PC-9 (cell line): ENCODE measurements at regions of chr18 and their contacts with region 1.

Region 1: GRCh38 chr18:3593904-3594661 is 144.1 kb downstream of the TGIF1 start:
- DNase-seq: peak; percentile 91 to 93
- H3K4me3 ChIP-seq: peak overlapping the region; percentile 69
- H3K27ac ChIP-seq: peak overlapping the region; percentile 100
- H3K4me1 ChIP-seq: peaks cover 77% of the 10 kb centered on the region
- H3K27me3 ChIP-seq: no peaks in the 10 kb centered on the region
- CTCF ChIP-seq: peak; percentile 88

Region 2: DNA sequence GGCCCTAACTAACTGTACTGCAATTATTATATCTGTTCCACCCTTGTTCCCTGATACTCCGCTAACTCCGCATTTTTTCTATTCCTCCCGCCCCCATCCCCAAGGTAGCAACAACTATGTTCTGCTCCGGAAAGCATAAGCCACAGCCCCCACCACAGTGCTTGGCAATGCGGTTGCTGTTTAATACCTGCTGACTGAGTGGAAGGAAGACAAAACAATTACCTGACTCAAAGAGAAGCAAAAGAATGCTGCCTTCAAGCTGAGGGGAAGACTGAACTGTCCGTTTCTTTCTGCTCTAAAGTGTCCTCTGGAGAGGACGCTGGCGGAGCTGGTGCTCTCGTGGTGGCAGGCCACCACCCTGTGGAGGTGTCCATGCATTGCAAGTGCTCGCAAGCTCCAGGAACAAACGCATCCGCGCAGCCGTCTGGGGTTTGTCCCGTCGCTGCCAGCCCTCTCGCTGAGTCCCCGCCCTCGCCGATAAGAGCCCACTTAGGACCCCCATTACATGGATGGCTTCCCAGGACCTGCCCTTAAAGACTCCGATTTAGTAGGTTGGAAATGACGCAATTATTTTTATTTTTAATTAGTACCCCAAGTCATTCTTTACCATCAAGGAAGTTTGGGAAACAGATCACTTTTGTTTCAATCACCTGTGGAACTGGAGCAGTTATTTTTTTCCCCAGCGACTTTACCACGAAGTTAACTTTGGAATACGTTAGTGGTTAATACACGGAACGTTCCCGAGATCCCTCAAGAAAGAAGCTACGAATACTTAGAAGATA is 348.0 kb before region 1 on chr18:
- CTCF ChIA-PET with region 1: interaction called, 12 read pairs
- POLR2A ChIA-PET with region 1: no interaction called
- intact Hi-C with region 1: no loop called
- DNase-seq: peak; percentile 79 to 88
- H3K4me3 ChIP-seq: peak overlapping the region; percentile 86
- H3K27ac ChIP-seq: peak overlapping the region; percentile 87
- H3K4me1 ChIP-seq: peaks cover 32% of the 10 kb centered on the region
- H3K27me3 ChIP-seq: no peaks in the 10 kb centered on the region
- CTCF ChIP-seq: peak; percentile 96

Region 3: GRCh38 chr18:3380384-3380961 is 213.6 kb before region 1 on chr18:
- CTCF ChIA-PET with region 1: interaction called, 18 read pairs
- POLR2A ChIA-PET with region 1: interaction called, 37 read pairs
- intact Hi-C with region 1: loop called (anchors 1 kb)
- DNase-seq: peak in 1 of 2 experiments; percentile 81
- H3K4me3 ChIP-seq: peak overlapping the region; percentile 35; the same call in 1 of the 2 replicates
- H3K27ac ChIP-seq: peak overlapping the region; percentile 99
- H3K4me1 ChIP-seq: peaks cover 64% of the 10 kb centered on the region
- H3K27me3 ChIP-seq: no peaks in the 10 kb centered on the region
- CTCF ChIP-seq: peak; percentile 44; the same call in 1 of the 2 replicates

Region 4: DNA sequence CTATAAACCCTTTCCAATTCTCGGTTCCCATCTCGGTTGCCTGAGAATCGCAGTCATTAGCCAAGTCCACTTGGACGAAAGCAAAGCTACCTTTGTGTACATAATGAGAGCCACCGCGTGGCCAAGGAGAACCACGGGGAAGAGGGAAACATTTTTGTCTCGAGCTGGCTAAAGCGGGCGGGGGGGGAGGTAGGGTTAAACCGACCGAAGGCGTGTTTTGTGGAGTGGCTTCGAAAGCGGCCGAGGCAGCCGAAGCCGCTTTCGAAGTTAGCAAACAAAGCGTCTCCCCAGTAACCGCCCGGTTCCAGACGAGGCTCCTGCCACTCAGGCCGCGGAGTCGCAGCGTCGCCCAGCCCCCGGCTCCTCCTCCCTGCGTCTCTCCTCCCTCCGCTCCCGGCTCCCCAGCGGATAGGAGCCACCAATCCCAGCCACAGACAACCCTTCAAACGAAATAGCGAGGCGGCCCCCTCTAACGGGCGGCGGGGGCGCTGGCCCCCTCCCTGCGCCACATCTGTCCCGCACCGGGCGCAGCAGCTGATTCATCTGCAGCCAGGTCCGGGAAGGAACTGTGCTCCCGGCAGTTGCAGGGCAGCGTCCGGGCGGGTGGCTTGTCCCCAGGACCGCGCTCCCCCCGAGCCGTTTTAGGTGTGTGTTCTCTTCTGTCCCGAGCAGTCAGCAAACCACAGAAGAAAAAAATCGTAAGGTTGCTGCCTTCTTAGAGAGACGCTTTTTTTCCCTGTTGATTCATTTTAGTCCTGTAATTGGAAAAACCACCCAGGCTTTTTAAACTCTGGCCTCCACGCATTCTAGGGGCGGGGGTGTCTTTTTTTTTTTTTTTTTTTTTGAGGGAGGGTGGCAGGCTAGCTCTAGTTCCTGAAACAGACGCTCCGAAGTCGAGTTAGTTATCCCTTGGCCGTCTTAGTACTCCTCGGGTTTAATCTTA is 145.9 kb before region 1 on chr18:
- CTCF ChIA-PET with region 1: interaction called, 3 read pairs
- POLR2A ChIA-PET with region 1: interaction called, 20 read pairs
- intact Hi-C with region 1: loop called (anchors 1 kb)
- DNase-seq: peak; percentile 95 to 98
- H3K4me3 ChIP-seq: peak overlapping the region; percentile 83
- H3K27ac ChIP-seq: peak overlapping the region; percentile 96
- H3K4me1 ChIP-seq: peaks cover 35% of the 10 kb centered on the region
- H3K27me3 ChIP-seq: no peaks in the 10 kb centered on the region
- CTCF ChIP-seq: no peak; the same call in 1 of the 2 replicates

Region 5: DNA sequence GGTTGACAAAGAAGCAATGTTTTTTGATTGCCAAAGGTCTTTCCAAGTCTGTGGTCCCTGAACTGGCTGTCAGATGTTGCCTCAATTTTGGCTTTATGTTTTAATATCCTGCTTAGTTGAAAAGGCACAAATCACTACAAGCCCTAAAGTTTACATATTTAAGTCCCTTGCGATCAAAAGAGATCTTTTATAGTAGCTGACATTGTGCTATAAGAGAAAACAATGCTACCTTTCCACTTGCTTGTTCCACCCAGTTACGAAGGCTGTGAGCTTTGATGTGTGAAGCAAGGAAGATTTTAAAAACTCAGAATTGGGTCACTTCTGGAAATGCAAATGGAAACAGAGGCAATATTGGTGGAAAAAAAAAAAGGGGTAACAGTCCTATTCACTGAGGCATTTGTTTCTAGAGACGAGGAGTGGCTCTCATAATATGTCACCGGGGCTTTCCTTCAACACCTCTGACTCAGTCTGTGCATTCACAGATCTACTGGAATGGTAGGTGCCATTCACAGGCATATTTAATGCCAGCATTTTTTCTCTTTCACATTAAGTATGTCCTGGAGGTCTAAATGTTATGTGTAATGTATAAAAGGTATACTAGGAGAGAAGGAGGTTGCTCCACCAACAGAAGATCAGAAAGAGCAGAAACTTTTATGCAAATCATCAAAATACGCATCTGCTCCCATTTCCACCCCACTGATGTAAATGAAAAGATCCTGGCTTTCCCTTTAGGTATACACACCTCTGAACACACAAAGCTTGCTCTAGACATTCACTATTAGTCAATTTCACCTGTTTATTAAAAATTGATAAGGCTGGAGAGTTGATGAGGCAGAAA is 52.3 kb before region 1 on chr18:
- CTCF ChIA-PET with region 1: no interaction called
- POLR2A ChIA-PET with region 1: no interaction called
- intact Hi-C with region 1: loop called (anchors 5 kb)
- DNase-seq: peak; percentile 14 to 43
- H3K4me3 ChIP-seq: no peak overlapping the region
- H3K27ac ChIP-seq: peak overlapping the region; percentile 65; the same call in 1 of the 2 replicates
- H3K4me1 ChIP-seq: peaks cover 30% of the 10 kb centered on the region
- H3K27me3 ChIP-seq: no peaks in the 10 kb centered on the region
- CTCF ChIP-seq: no peak

Region 6: GRCh38 chr18:3652380-3653262 is 58.5 kb after region 1 on chr18:
- CTCF ChIA-PET with region 1: interaction called, 3 read pairs
- POLR2A ChIA-PET with region 1: interaction called, 45 read pairs
- intact Hi-C with region 1: loop called (anchors 1 kb)
- DNase-seq: peak; percentile 97 to 99
- H3K4me3 ChIP-seq: peak overlapping the region; percentile 63
- H3K27ac ChIP-seq: peak overlapping the region; percentile 99
- H3K4me1 ChIP-seq: peaks cover 80% of the 10 kb centered on the region
- H3K27me3 ChIP-seq: no peaks in the 10 kb centered on the region
- CTCF ChIP-seq: 0 out of 2 replicates have a peak, but pooled peaks have one; percentile 19

Region 7: GRCh38 chr18:4157352-4157751 is 563.3 kb after region 1 on chr18:
- CTCF ChIA-PET with region 1: no interaction called
- POLR2A ChIA-PET with region 1: interaction called, 10 read pairs
- intact Hi-C with region 1: no loop called
- DNase-seq: no peak
- H3K4me3 ChIP-seq: no peak overlapping the region
- H3K27ac ChIP-seq: no peak overlapping the region
- H3K4me1 ChIP-seq: no peaks in the 10 kb centered on the region
- H3K27me3 ChIP-seq: peaks cover 36% of the 10 kb centered on the region
- CTCF ChIP-seq: no peak